ENCODE measurements at regions of chr18 and their contacts with region 1.

Region 1: GRCh38 chr18:21740724-21741510 is at the start of gene MIB1:
- DNase-seq: peak in 1 of 2 experiments; percentile 56
- H3K4me3 ChIP-seq: peak within 1 kb of the TSS; percentile 99
- H3K4me3 Mint-ChIP-seq: peak within 1 kb of the TSS; percentile 89
- H3K27ac Mint-ChIP-seq: peak within 1 kb of the TSS; percentile 95
- H3K4me1 ChIP-seq: peaks cover 6% of the 10 kb centered on the region; the same call in 1 of the 2 replicates
- H3K4me1 Mint-ChIP-seq: peaks cover 14% of the 10 kb centered on the region
- H3K27me3 ChIP-seq: no peaks in the 10 kb centered on the region
- H3K27me3 Mint-ChIP-seq: no peaks in the 10 kb centered on the region
- CTCF ChIP-seq: no peak
- total RNA-seq, gene MIB1: 43.2 and 48.1 TPM in 2 replicates

Region 2: DNA sequence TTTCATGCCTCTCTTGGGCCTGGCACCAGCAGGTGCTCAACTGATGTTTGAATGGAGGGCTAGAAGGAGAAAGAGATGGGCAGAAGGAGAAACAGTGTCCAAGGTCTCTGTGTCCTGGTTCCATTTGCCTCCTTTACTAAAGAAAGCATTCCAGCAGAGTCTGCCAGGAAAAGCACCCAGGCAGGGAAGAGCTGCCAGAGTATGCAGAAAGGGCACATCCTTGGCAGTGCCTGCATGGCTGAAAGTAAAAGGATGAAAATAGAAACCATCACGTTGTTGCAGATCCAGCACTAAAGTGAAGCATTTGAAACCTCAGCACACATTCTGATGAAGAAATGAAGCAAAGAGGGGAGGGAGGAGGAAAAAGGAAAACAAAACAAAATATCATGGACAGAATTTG is 282.6 kb before region 1 on chr18:
- CTCF ChIA-PET with region 1: no interaction called
- POLR2A ChIA-PET with region 1: interaction called, 10 read pairs
- intact Hi-C with region 1: no loop called
- DNase-seq: no peak
- H3K4me3 ChIP-seq: no peak overlapping the region
- H3K4me3 Mint-ChIP-seq: no peak overlapping the region
- H3K27ac Mint-ChIP-seq: no peak overlapping the region
- H3K4me1 ChIP-seq: no peaks in the 10 kb centered on the region
- H3K4me1 Mint-ChIP-seq: no peaks in the 10 kb centered on the region
- H3K27me3 ChIP-seq: no peaks in the 10 kb centered on the region
- H3K27me3 Mint-ChIP-seq: no peaks in the 10 kb centered on the region
- CTCF ChIP-seq: no peak

Region 3: GRCh38 chr18:21632393-21632792 is 108.5 kb before region 1 on chr18:
- CTCF ChIA-PET with region 1: no interaction called
- POLR2A ChIA-PET with region 1: no interaction called
- intact Hi-C with region 1: loop called (anchors 10 kb)
- DNase-seq: no peak
- H3K4me3 ChIP-seq: no peak overlapping the region
- H3K4me3 Mint-ChIP-seq: no peak overlapping the region
- H3K27ac Mint-ChIP-seq: no peak overlapping the region
- H3K4me1 ChIP-seq: no peaks in the 10 kb centered on the region
- H3K4me1 Mint-ChIP-seq: no peaks in the 10 kb centered on the region
- H3K27me3 ChIP-seq: no peaks in the 10 kb centered on the region
- H3K27me3 Mint-ChIP-seq: no peaks in the 10 kb centered on the region
- CTCF ChIP-seq: no peak

Region 4: GRCh38 chr18:21682371-21683051 is 58.4 kb before region 1 on chr18:
- CTCF ChIA-PET with region 1: interaction called, 3 read pairs
- POLR2A ChIA-PET with region 1: no interaction called
- intact Hi-C with region 1: loop called (anchors 1 kb)
- DNase-seq: no peak
- H3K4me3 ChIP-seq: no peak overlapping the region
- H3K4me3 Mint-ChIP-seq: no peak overlapping the region
- H3K27ac Mint-ChIP-seq: no peak overlapping the region
- H3K4me1 ChIP-seq: peaks cover 28% of the 10 kb centered on the region
- H3K4me1 Mint-ChIP-seq: peaks cover 12% of the 10 kb centered on the region
- H3K27me3 ChIP-seq: no peaks in the 10 kb centered on the region
- H3K27me3 Mint-ChIP-seq: no peaks in the 10 kb centered on the region
- CTCF ChIP-seq: no peak

Region 5: DNA sequence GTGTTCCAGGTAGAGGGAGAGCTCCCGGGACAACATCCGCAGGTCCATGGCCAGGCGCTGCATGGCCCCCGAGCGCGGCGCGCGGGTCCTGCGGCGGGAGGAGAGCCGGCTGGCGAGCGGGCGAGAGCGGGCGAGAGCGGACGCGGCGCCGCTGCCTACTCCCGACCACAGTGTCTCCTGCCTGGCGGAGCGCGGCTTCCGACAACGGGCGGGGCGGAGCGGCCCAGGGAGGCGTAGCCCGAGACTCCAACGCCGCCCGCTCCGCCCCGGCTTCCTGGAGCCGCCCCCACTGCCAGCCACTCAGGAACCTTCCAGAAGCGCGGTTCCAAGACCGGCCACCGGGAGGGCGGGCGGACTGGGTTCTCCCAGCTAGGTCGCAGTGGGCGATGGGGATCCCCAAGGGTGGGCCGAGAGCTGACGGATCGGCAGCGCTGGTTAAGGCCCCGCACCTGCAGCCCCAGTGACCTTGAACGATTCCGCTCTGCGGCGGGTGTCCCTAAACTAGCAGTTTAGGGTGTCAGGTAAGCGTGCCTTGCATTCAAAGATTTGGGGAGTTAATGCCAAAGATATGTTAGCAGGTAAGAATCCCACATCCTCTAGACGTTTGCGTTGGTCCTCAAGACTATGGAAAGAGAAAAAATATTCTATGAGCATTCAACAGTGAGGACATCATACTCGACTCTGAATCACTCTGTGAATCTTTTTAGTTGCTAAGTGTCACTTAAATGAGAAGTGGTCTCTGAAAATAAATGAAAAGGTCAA is 36.1 kb before region 1 on chr18 and contains the start of gene ABHD3:
- CTCF ChIA-PET with region 1: interaction called, 10 read pairs
- POLR2A ChIA-PET with region 1: interaction called, 29 read pairs
- intact Hi-C with region 1: loop called (anchors 1 kb)
- DNase-seq: peak; percentile 94 to 96
- H3K4me3 ChIP-seq: peak within 1 kb of the TSS; percentile 84
- H3K4me3 Mint-ChIP-seq: peak within 1 kb of the TSS; percentile 86
- H3K27ac Mint-ChIP-seq: peak within 1 kb of the TSS; percentile 64
- H3K4me1 ChIP-seq: peaks cover 6% of the 10 kb centered on the region
- H3K4me1 Mint-ChIP-seq: peaks cover 6% of the 10 kb centered on the region
- H3K27me3 ChIP-seq: no peaks in the 10 kb centered on the region
- H3K27me3 Mint-ChIP-seq: no peaks in the 10 kb centered on the region
- CTCF ChIP-seq: peak; percentile 25 to 39
- total RNA-seq, gene ABHD3: 29.3 and 31.8 TPM in 2 replicates

Region 6: DNA sequence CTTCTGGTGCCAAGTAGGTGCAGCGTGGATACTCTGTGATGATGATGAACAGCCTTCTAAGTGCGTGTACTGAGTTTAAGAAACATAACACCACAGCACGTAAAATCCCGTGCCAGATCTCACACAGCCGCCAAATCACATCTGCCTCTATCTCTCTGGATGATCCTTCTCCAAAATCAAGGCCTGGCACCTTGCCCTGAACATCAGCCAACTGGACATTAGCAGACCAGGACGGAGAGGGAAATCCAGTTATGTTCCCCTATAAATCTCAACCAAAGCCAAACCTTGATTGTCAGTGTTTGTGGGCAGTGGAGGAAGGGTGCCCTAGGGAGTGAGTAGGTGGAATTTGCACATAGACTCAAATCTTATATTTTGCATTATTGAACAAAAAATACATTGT is 163.9 kb after region 1 on chr18:
- CTCF ChIA-PET with region 1: no interaction called
- POLR2A ChIA-PET with region 1: no interaction called
- intact Hi-C with region 1: no loop called
- DNase-seq: no peak
- H3K4me3 ChIP-seq: no peak overlapping the region
- H3K4me3 Mint-ChIP-seq: no peak overlapping the region
- H3K27ac Mint-ChIP-seq: no peak overlapping the region
- H3K4me1 ChIP-seq: no peaks in the 10 kb centered on the region
- H3K4me1 Mint-ChIP-seq: peaks cover 7% of the 10 kb centered on the region
- H3K27me3 ChIP-seq: no peaks in the 10 kb centered on the region
- H3K27me3 Mint-ChIP-seq: no peaks in the 10 kb centered on the region
- CTCF ChIP-seq: no peak

Measured in Caco-2 (cell line).